H1 (cell line): ENCODE measurements at regions of chr2 and their contacts with region 1.

Region 1: GRCh38 chr2:21422050-21422449 is 298.3 kb downstream of the TDRD15 start:
- DNase-seq: peak; percentile 44 to 94
- H3K4me3 ChIP-seq: no peak overlapping the region
- H3K27ac ChIP-seq: no peak overlapping the region
- H3K4me1 ChIP-seq: peaks cover 0 to 2% (median 0%) of the 10 kb centered on the region in 4 experiments; a peak in 1 of 7 replicates
- H3K27me3 ChIP-seq: no peaks in the 10 kb centered on the region
- CTCF ChIP-seq: peak; percentile 86 to 91 (median 91)
- EP300 ChIP-seq: no peak
- POLR2A ChIP-seq: no peak
- RAD21 ChIP-seq: peak; percentile 87 to 93

Region 2: DNA sequence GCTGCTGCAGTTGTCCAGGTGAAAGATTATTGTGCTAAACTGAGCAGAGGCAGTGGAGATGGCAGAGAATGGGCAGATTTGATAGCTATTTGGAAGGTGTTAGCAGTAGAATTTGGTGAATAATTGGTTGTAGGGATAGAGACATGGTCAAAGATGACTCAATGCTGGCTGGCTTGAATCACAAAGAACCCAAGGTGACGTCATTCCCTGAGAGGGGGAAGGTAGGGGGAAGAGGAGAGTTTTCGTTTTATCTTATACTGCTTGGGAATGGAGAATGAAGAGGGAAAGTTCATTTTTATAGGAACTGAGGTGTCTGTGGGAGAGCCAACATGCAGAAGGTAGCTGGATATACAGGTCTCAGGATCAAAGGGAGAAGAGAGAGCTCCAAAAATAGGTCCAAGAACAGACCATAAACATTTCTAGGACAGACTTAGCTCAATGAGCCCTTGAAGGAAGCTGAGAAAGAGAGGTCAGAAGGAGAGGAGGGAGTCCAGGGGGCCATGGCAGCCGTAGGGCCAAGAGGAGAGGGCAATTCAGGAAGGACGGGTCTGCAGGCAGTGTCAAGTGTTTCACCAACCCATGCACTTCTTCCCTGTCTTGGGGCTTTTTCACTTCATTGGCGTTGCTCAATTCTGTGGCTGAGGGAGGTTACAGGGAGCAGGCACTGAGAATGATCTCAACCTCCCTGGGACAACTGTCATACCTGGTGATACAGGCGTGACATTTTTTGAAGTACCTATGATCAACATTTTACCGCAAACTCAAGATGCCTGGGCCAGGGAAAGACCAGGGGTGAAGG is 17.0 kb before region 1 on chr2:
- CTCF ChIA-PET with region 1: interaction called, 11 read pairs
- POLR2A ChIA-PET with region 1: no interaction called
- DNase-seq: no peak
- H3K4me3 ChIP-seq: no peak overlapping the region
- H3K27ac ChIP-seq: no peak overlapping the region
- H3K4me1 ChIP-seq: peaks cover 0 to 3% (median under 1%) of the 10 kb centered on the region in 4 experiments; a peak in 2 of 7 replicates
- H3K27me3 ChIP-seq: no peaks in the 10 kb centered on the region
- CTCF ChIP-seq: no peak
- EP300 ChIP-seq: no peak
- POLR2A ChIP-seq: no peak
- RAD21 ChIP-seq: no peak

Region 3: GRCh38 chr2:21452678-21453077 is 30.6 kb after region 1 on chr2:
- CTCF ChIA-PET with region 1: interaction called, 13 read pairs
- POLR2A ChIA-PET with region 1: no interaction called
- DNase-seq: no peak
- H3K4me3 ChIP-seq: no peak overlapping the region
- H3K27ac ChIP-seq: no peak overlapping the region
- H3K4me1 ChIP-seq: peaks cover 0 to 11% (median 9%) of the 10 kb centered on the region in 4 experiments; a peak in 5 of 7 replicates
- H3K27me3 ChIP-seq: no peaks in the 10 kb centered on the region
- CTCF ChIP-seq: no peak
- EP300 ChIP-seq: no peak
- POLR2A ChIP-seq: no peak
- RAD21 ChIP-seq: no peak